IMR-90 (cell line): ENCODE measurements at regions of chr5 and their contacts with region 1.

Region 1: GRCh38 chr5:150129813-150130492 is 25.7 kb downstream of the PDGFRB start:
- DNase-seq: peak; percentile 78
- ATAC-seq: peak; percentile 87
- H3K4me3 ChIP-seq: no peak overlapping the region
- H3K27ac ChIP-seq: 0 out of 2 replicates have a peak overlapping the region, but pooled peaks have one; percentile 18
- H3K4me1 ChIP-seq: peaks cover 31% of the 10 kb centered on the region
- H3K27me3 ChIP-seq: no peaks in the 10 kb centered on the region
- CTCF ChIP-seq: peak; percentile 92
- POLR2A ChIP-seq: peak; percentile 42; the same call in 1 of the 2 replicates
- RAD21 ChIP-seq: peak; percentile 96

Region 2: DNA sequence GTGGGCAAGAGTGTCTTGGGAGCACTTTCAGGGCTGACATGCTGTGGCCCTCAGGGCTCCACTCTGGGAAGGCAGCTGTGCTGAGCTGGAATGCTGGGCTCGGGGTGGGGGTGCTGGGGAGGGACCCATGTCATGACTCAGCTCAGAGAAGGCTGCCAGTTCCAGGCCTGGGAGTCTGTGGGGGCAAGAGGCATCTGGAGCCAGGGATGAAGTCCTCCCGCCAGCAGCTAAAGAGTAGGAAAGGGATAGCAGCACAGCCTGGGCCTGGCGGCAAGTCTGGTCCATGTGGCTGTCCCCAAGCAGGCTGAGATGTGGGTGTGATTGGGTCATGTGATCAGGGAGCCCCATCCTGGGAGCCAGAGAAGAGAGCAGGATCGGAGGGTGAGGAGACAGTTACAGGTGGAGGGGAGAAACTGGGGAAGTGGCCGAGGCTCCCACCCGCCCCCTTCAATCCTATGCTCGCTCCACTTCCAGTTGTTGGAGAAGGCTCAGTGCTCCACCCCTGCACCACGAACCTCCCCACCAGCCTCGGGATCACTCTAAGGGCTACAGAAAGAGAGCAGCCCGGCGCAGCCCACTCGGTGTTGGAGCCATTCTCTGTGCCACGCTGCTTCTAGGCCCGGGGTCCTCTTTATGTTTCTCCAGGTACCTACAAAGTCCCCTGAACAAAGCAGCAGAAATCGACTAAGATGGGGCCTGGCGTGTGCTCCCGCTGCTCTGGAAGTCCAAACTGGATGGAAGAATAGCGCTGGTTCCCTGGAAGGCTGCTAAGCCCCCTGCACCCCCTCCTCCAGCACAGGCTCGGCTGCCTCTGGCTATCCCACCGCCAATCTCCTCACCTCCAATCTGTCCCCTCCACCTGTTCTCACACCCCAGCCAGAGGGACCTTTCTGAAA is 13.6 kb after region 1 on chr5:
- CTCF ChIA-PET with region 1: no interaction called
- POLR2A ChIA-PET with region 1: no interaction called
- dilution Hi-C with region 1: no loop called
- in situ Hi-C with region 1: no loop called
- intact Hi-C with region 1: loop called (anchors 1 kb)
- DNase-seq: peak; percentile 96
- ATAC-seq: peak; percentile 36
- H3K4me3 ChIP-seq: no peak overlapping the region
- H3K27ac ChIP-seq: peak overlapping the region; percentile 98
- H3K4me1 ChIP-seq: peaks cover 60% of the 10 kb centered on the region
- H3K27me3 ChIP-seq: no peaks in the 10 kb centered on the region
- CTCF ChIP-seq: no peak
- POLR2A ChIP-seq: peak; percentile 50
- RAD21 ChIP-seq: peak; percentile 25; the same call in 1 of the 2 replicates

Region 3: GRCh38 chr5:150155258-150156026 is 25.5 kb after region 1 on chr5 and contains the start of gene PDGFRB:
- CTCF ChIA-PET with region 1: interaction called, 3 read pairs
- POLR2A ChIA-PET with region 1: no interaction called
- dilution Hi-C with region 1: no loop called
- in situ Hi-C with region 1: no loop called
- intact Hi-C with region 1: loop called (anchors 2 kb)
- DNase-seq: peak; percentile 89
- ATAC-seq: peak; percentile 79
- H3K4me3 ChIP-seq: peak within 1 kb of the TSS; percentile 76
- H3K27ac ChIP-seq: peak within 1 kb of the TSS; percentile 91
- H3K4me1 ChIP-seq: peaks cover 46% of the 10 kb centered on the region
- H3K27me3 ChIP-seq: no peaks in the 10 kb centered on the region
- CTCF ChIP-seq: 0 out of 2 replicates have a peak, but pooled peaks have one; percentile 3
- POLR2A ChIP-seq: peak; percentile 91
- RAD21 ChIP-seq: no peak
- total RNA-seq, gene PDGFRB: 81.9 and 108 TPM in 2 replicates

Region 4: DNA sequence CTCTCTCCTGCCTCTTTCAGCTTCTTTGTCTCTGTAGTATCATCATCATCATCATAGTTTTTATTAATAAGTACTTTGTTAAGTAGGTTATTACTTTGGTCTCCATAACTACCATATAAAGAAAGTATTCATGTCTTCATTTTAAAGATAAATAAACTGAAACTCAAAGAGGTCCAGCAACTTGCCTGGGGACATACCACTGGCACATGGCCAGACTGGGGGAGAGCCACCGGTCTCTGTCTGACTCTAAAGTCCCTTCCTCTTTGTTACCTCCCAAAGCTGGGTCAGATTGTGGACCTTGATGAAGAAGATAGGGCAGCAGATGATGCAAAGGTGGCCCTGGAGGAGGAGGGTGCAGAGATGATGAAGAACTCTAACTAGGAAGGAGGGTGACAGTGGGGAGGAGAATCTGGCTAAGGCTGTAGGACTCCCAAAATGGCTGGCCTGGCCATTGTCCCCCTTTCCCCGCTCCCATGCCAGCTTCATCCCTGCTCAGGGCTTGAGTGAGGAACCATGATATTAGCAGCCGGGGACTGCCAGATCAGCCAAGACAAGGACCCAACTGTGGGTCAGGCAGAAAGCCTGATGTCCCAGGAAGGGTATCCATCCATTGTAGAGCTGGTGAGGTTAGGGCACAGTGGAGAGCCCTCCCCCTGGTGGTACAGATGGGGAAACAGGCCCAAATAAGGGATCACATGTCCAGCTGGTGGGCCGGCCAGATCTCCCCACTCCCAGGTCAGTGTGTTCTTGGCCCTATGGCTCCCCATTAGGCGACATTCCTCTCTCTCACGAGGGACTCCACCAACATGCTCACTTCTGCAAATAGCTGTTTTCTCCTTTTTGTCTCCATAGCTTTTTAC is 45.4 kb after region 1 on chr5:
- CTCF ChIA-PET with region 1: no interaction called
- POLR2A ChIA-PET with region 1: no interaction called
- dilution Hi-C with region 1: no loop called
- in situ Hi-C with region 1: no loop called
- intact Hi-C with region 1: loop called (anchors 1 kb)
- DNase-seq: peak; percentile 25
- ATAC-seq: peak; percentile 48; the same call in 1 of the 2 replicates
- H3K4me3 ChIP-seq: no peak overlapping the region
- H3K27ac ChIP-seq: no peak overlapping the region
- H3K4me1 ChIP-seq: peaks cover 10% of the 10 kb centered on the region
- H3K27me3 ChIP-seq: peaks cover 11% of the 10 kb centered on the region
- CTCF ChIP-seq: peak; percentile 51
- POLR2A ChIP-seq: no peak
- RAD21 ChIP-seq: peak; percentile 32